ENCODE measurements at regions of chr3 and their contacts with region 1.

Region 1: DNA sequence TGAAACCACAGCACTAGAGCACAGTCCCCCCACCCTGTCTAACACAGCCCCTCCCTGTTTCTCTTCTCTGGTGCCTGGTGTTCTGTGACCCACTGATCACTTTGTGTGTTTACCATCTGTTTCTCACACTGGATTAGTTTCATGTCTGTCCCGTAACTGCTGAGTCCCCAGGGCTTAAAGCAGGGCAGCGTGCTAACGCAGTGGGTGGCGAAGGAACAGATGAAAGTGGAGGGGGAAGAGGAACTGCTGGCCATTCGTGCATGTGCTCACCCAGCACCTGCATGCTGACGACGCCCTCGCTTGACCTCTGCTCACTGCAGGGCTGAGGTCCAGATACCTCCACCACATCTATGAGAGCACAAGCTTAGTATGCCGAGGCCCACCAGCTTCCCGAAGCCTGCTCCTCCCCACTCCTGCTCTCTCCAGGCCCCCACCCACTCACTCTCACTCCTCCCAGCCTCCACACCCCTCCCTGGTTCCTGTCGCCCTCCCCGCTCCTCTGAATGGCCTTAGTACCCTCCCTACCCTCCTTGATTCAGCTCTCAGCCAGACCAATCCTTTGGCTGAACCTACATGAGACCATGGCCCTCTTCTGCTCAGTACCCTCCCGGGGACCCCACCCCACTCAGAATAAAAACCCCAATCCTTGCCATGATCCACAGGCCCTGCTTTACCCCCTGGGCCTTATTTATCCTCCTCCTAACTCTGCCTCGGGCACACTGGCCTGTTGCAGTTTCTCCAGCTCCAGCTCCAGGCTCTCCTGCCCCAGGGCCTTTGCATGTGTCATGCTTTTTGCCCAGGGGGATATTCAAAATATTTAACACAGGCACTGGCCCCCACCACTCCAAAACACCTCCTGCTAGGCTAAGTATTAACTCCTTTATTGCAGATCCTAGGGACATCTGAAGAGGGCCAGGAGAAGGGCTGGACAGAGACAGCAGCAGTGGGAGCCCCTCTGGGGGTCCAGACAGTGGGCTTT is 15.1 kb upstream of the IQSEC1 start:
- DNase-seq: no peak
- H3K4me3 ChIP-seq: no peak overlapping the region
- H3K27ac ChIP-seq: no peak overlapping the region
- H3K4me1 ChIP-seq: no peaks in the 10 kb centered on the region
- H3K27me3 ChIP-seq: 0 out of 2 replicates have a peak, but pooled peaks cover 5% of the 10 kb centered on the region

Region 2: DNA sequence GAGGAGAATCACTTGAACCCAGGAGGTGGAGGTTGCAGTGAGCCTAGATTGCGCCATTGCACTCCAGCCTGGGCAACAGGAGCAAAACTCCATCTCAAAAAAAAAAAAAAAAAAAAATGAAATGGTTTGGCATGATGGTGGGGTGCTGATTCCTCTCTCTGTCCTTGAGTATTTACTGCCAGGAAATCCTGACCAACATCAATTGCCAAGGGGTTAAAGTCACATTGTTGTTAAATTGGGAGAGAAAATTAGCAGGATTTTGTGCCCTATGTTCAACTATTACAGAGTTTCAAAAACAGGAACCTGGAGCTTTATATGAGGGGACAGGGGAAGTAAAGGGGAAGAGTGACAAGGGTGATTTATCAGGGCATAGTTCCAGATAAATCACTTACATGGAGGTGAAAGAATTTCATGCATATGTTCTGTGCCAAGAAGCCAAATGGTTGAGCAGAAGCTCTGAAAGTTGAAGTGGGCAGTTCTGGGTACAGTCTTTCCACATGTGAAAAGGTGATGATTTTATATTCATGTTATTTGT is 674.5 kb before region 1 on chr3:
- in situ Hi-C with region 1: no loop called
- DNase-seq: no peak
- H3K4me3 ChIP-seq: no peak overlapping the region
- H3K27ac ChIP-seq: no peak overlapping the region
- H3K4me1 ChIP-seq: no peaks in the 10 kb centered on the region
- H3K27me3 ChIP-seq: no peaks in the 10 kb centered on the region

Region 3: DNA sequence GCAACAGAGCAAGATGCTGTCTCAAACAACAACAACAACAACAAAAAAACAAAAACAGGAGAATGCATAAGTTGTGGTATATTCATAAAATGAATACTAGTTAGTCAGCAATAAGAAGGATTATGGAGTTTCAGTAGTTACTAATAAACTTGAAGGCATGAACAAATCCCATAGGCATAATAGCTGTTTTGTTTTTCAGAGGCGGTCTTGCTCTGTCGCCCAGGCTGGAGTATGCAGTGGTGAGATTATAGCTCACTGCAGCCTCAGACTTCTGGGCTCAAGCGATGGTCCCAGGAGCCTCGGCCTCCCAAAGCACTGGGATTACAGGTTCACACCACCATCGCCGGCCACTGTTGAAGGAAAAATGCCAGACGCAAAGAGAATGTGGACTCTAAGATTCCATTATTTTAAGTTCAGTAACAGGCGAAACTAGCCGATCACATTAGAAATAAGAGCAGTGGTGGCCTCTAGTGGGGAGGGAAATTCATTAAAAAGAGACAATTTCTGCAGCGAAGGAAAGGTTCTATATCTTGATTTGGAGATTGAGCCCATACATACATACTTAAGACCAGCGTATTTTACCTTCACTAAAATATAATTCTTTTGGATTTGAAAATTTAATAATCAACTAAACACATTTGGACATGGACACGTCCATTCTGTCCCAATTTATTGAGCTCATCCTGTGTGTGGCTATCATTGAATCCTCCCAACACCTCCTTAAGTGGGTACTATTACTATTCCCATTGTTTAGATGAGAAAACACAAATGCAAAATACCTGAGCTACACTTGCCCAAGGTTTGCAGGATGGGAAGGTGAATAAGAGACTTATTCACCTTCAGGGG is 364.4 kb after region 1 on chr3:
- in situ Hi-C with region 1: loop called (anchors 10 kb)
- DNase-seq: peak; percentile 85
- H3K4me3 ChIP-seq: peak overlapping the region; percentile 81
- H3K27ac ChIP-seq: peak overlapping the region; percentile 82; the same call in 1 of the 2 replicates
- H3K4me1 ChIP-seq: 0 out of 2 replicates have a peak, but pooled peaks cover 4% of the 10 kb centered on the region
- H3K27me3 ChIP-seq: no peaks in the 10 kb centered on the region

Region 4: DNA sequence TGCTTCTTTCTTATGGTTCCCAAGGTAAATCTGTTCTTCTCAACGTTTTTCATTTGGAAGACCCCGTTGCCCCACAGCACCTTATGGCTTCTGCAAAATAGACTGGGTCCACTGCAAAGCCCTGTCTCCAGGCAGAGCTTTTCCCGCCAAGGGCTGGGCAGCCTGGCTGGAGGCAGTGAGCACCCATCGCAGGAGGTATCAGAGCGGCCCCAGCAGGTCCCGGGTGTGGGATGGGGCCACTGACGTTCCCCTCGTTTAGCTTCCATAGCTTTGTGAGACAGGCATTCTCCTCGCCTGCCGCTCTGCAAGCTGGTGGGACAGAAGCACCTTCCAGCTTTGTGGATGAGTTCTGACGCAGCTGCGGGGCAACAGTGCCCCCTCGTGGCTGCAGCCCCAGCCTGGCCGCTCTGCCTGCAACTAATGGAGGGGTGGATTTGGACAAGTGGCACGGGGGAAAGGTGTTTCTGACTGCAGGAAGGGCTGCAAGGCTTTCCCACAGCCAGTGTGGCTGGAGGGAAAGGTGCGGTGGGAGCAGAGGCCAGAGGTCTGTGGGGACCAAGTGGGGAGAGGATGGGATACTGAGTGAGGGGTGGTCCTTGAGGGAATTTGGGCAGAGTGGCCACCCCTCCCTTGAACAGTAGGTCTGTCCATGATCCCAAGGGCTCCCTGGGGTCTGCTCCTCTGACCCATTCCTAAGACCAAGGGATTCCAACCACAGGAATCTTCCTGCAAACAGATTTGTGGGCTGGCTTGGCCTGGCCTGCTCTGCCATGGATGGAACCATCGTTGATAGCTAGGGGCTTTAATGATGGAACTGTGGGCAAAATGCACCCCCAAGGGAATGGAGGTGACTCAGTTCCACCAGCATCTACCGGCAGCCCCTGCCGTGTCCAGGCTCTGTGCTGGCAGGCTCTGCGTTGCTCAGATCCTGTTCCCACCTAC is 560.0 kb after region 1 on chr3:
- in situ Hi-C with region 1: loop called (anchors 5 kb)
- DNase-seq: peak; percentile 89
- H3K4me3 ChIP-seq: peak overlapping the region; percentile 61
- H3K27ac ChIP-seq: peak overlapping the region; percentile 62
- H3K4me1 ChIP-seq: peaks cover 20% of the 10 kb centered on the region
- H3K27me3 ChIP-seq: no peaks in the 10 kb centered on the region